ENCODE measurements at regions of chr3 and their contacts with region 1.

Region 1: DNA sequence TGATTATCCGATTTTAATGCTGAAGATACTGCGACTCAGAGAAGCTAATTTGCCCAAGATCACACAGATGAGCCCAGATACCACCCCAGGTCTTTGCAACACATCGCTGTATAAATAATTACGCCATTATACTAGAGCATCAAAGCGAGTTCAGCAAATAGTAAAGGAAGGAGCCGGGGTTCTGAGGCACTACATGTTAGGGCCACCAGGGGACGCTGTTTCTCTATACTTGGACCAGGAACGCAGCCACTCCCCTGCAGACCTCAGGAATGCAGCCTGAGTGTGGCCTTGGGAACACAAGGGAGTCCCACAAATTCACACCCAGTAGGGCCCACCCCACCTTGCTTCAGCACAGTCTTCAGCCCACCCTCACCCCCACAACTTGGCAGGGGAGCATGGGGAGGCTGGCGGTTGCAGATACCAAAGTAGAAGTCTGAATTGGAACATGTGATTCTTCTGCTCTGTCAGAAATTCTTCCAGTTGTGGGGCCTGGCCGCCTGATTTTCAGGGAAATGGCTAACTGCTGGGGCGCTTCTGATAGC is 57.8 kb upstream of the RYK start:
- DNase-seq: peak; percentile 74 to 88
- H3K4me3 ChIP-seq: no peak overlapping the region
- H3K27ac ChIP-seq: peak overlapping the region; percentile 98
- H3K4me1 ChIP-seq: peaks cover 52% of the 10 kb centered on the region
- H3K27me3 ChIP-seq: no peaks in the 10 kb centered on the region
- CTCF ChIP-seq: peak; percentile 99

Region 2: GRCh38 chr3:132722164-132723024 is 1586.0 kb before region 1 on chr3 and contains the start of gene NPHP3:
- CTCF ChIA-PET with region 1: no interaction called
- POLR2A ChIA-PET with region 1: no interaction called
- intact Hi-C with region 1: loop called (anchors 10 kb)
- DNase-seq: peak; percentile 74 to 93
- H3K4me3 ChIP-seq: peak within 1 kb of the TSS; percentile 91
- H3K27ac ChIP-seq: peak within 1 kb of the TSS; percentile 33
- H3K4me1 ChIP-seq: peaks cover 13% of the 10 kb centered on the region
- H3K27me3 ChIP-seq: no peaks in the 10 kb centered on the region
- CTCF ChIP-seq: no peak
- total RNA-seq, gene NPHP3: 23.4 and 26.5 TPM in 2 replicates

Region 3: DNA sequence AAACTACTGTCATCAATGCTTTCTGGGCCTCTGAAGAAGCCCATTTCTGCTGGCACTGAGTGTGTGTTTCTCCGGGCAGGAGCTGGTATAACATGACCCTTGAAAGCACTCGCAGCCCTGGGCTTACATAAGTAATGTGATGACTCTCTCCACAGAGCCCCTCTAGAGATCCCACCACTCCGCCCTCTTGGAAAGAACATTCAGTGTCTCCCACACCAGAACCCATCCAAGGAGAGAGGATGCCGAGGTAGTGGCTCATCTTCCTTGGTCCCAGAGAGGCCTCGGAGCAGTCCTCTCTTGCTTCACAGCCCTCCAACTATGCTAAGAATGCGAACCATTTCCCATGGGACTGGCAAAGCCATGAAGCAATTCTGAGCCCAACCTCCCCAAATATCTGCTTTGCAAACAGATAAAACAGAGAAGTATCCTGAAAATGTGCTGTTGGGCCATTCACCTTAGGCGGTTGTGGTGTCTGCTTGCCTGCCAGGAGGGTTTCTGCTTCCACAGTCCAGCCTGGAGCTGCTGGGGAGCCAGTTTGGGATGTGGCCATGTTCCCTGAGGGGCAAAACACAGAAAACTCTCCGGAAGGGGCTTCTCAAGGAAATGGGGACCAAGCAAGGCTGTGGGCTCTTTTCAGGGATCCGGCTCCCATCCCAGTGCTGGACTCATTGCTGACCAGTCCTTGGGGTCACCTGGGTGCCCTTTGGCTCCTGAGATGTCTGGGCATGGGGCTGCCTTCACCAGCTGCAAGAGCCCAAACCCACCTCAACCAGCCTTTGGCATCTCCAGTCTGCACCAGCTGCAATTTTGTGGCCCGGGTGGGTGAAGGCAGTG is 18.6 kb after region 1 on chr3:
- CTCF ChIA-PET with region 1: interaction called, 4 read pairs
- POLR2A ChIA-PET with region 1: interaction called, 15 read pairs
- intact Hi-C with region 1: loop called (anchors 1 kb)
- DNase-seq: peak; percentile 86 to 98
- H3K4me3 ChIP-seq: peak overlapping the region; percentile 23; the same call in 1 of the 2 replicates
- H3K27ac ChIP-seq: peak overlapping the region; percentile 97
- H3K4me1 ChIP-seq: peaks cover 91% of the 10 kb centered on the region
- H3K27me3 ChIP-seq: no peaks in the 10 kb centered on the region
- CTCF ChIP-seq: no peak

Region 4: GRCh38 chr3:134357261-134358184 is 49.1 kb after region 1 on chr3:
- CTCF ChIA-PET with region 1: interaction called, 10 read pairs
- POLR2A ChIA-PET with region 1: interaction called, 10 read pairs
- intact Hi-C with region 1: loop called (anchors 1 kb)
- DNase-seq: peak; percentile 91 to 98
- H3K4me3 ChIP-seq: peak overlapping the region; percentile 20; the same call in 1 of the 2 replicates
- H3K27ac ChIP-seq: peak overlapping the region; percentile 100
- H3K4me1 ChIP-seq: peaks cover 99% of the 10 kb centered on the region
- H3K27me3 ChIP-seq: no peaks in the 10 kb centered on the region
- CTCF ChIP-seq: no peak

Region 5: GRCh38 chr3:134427400-134428145 is 119.2 kb after region 1 on chr3:
- CTCF ChIA-PET with region 1: no interaction called
- POLR2A ChIA-PET with region 1: interaction called, 8 read pairs
- intact Hi-C with region 1: loop called (anchors 1 kb)
- DNase-seq: peak; percentile 93 to 98
- H3K4me3 ChIP-seq: no peak overlapping the region
- H3K27ac ChIP-seq: peak overlapping the region; percentile 60
- H3K4me1 ChIP-seq: peaks cover 31% of the 10 kb centered on the region
- H3K27me3 ChIP-seq: no peaks in the 10 kb centered on the region
- CTCF ChIP-seq: no peak

Region 6: DNA sequence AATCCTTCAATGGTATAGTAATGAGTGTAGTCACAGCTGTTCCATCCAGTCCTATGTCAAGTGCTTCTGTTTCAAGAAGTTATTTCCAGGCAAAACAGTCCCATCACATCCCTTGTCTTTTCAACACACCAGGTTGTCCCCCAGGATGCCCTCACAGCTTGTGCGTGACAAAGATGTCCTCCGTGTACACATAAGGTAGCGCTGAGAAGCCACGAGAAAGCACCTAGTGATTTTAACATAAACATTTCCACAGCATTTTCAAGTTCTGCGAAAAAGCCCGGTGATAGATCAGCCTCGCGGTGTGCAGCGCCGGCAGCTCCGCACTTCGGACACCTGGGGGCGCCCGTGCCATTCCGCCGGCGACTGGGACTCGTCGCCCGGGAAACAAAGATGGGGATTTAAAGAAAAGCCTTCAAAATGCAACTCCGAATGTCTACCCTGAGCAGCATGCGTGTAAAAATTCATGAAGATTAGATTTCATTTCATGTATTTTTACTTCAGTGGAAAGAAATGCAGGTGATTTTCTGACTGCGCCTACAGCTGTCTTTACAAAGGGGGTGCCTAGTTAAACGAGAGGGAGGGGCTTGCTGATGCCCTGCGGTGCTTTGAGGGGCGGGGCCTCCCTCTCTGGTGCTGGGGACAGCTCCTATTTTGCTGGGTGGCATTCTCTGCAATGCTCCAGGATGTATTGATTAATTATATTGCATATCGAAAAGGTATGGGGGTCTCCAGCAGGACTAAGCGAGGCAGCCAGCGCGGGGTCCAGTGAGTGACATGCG is 292.5 kb after region 1 on chr3:
- CTCF ChIA-PET with region 1: no interaction called
- POLR2A ChIA-PET with region 1: no interaction called
- intact Hi-C with region 1: loop called (anchors 5 kb)
- DNase-seq: peak in 1 of 2 experiments; percentile 70
- H3K4me3 ChIP-seq: no peak overlapping the region
- H3K27ac ChIP-seq: no peak overlapping the region
- H3K4me1 ChIP-seq: no peaks in the 10 kb centered on the region
- H3K27me3 ChIP-seq: peaks cover 59% of the 10 kb centered on the region
- CTCF ChIP-seq: peak; percentile 94

Region 7: GRCh38 chr3:135851201-135852081 is 1543.0 kb after region 1 on chr3:
- CTCF ChIA-PET with region 1: no interaction called
- POLR2A ChIA-PET with region 1: no interaction called
- intact Hi-C with region 1: no loop called
- DNase-seq: no peak
- H3K4me3 ChIP-seq: no peak overlapping the region
- H3K27ac ChIP-seq: no peak overlapping the region
- H3K4me1 ChIP-seq: no peaks in the 10 kb centered on the region
- H3K27me3 ChIP-seq: peaks cover 9% of the 10 kb centered on the region
- CTCF ChIP-seq: no peak

Measured in PC-9 (cell line).